Right lobe of liver (tissue), 6 donors: ENCODE measurements at regions of chr6 and their contacts with region 1.

Region 1: GRCh38 chr6:44010411-44011349 is 116.6 kb downstream of the MRPL14 start:
- DNase-seq: peak in 1 of 3 donors; percentile 48
- ATAC-seq: peak in 1 of 4 donors; percentile 52
- H3K4me3 ChIP-seq: no peak overlapping the region
- H3K27ac ChIP-seq: no peak overlapping the region
- H3K4me1 ChIP-seq: no peaks in the 10 kb centered on the region
- H3K27me3 ChIP-seq: no peaks in the 10 kb centered on the region
- CTCF ChIP-seq: no peak
- POLR2A ChIP-seq: no peak

Region 2: GRCh38 chr6:44064089-44064947 is 53.6 kb after region 1 on chr6:
- intact Hi-C with region 1: loop called in 1 of 2 experiments (anchors 10 kb)
- DNase-seq: peak in 1 of 3 donors; percentile 71
- ATAC-seq: peak; percentile 65 to 82 (median 72)
- H3K4me3 ChIP-seq: no peak overlapping the region
- H3K27ac ChIP-seq: peak overlapping the region in 1 of 3 donors; percentile 52
- H3K4me1 ChIP-seq: peaks cover 0 to 6% (median 0%) of the 10 kb centered on the region in 4 donors
- H3K27me3 ChIP-seq: no peaks in the 10 kb centered on the region
- CTCF ChIP-seq: no peak
- POLR2A ChIP-seq: no peak

Region 3: DNA sequence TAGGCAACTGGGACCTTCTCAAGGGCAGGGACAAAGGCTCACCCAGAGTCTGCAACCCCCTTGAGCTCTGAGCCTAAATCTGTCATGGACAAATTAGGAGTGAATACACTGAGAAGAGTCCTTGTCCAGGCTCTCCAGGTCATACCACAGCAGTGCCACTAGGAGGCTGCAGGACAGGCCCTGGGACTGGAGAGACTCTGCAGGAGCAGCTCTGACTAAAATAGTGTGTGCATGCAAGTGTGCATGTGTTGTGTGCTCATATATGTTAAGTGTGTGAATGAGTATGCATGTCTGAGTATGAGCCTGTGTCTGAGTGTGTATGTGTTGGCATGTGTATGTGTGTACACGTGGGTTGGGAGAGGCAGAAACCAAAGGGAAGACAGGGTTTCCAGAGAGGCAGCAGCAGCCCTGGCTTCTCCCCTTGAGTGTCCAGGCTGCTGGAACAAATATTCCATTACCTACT is 89.4 kb after region 1 on chr6:
- intact Hi-C with region 1: no loop called
- DNase-seq: no peak
- ATAC-seq: peak; percentile 60 to 76 (median 72)
- H3K4me3 ChIP-seq: no peak overlapping the region
- H3K27ac ChIP-seq: no peak overlapping the region
- H3K4me1 ChIP-seq: peaks cover 0 to 21% (median 6%) of the 10 kb centered on the region in 4 donors
- H3K27me3 ChIP-seq: no peaks in the 10 kb centered on the region
- CTCF ChIP-seq: peak; percentile 53 to 66 (median 62)
- POLR2A ChIP-seq: no peak